ENCODE measurements at regions of chr19 and their contacts with region 1.

Region 1: DNA sequence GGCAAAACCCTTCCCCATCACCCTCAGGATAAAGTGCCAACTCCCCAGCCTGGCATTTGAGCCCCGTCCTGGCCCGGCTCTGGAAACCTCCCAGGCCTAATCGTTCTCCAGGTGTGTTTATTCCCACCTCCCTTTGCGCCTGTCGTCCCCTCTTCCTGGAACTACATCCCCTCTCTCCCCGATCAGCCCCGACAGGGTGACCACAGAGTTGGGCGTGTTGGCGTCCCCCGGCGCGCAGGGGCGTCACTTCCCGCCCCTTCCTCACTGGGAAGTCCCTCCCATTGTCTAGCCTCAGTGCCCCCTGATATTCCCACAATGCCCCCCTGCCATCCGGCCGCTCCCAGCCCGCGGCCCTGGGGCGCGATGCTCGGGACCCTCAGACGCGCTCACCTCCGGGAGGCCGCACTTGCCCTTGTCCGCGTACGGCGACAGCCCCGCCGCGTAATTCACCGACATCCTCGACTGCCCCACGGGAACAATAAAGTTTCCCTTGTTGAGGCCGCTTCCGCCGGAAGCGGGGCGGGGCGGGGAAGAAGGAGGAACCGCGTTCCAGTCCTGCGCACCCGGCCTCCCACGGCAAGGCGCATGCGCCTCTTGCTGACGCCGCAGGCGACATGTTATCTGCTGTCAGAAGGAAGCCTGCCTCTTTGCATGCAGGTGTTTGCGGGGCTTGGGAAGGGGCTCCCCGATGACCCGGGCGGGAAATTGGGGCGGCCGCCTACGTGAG is at the starts of genes ANKRD24 and SIRT6:
- DNase-seq: peak; percentile 96
- H3K4me3 Mint-ChIP-seq: peak within 1 kb of the TSS; percentile 98
- H3K27ac Mint-ChIP-seq: peak within 1 kb of the TSS; percentile 94
- H3K4me1 Mint-ChIP-seq: peaks cover 45% of the 10 kb centered on the region
- H3K27me3 Mint-ChIP-seq: peaks cover 8% of the 10 kb centered on the region
- total RNA-seq, gene ANKRD24: 0.49 and 0.54 TPM in 2 replicates
- total RNA-seq, gene SIRT6: 42.6 and 46.4 TPM in 2 replicates

Region 2: DNA sequence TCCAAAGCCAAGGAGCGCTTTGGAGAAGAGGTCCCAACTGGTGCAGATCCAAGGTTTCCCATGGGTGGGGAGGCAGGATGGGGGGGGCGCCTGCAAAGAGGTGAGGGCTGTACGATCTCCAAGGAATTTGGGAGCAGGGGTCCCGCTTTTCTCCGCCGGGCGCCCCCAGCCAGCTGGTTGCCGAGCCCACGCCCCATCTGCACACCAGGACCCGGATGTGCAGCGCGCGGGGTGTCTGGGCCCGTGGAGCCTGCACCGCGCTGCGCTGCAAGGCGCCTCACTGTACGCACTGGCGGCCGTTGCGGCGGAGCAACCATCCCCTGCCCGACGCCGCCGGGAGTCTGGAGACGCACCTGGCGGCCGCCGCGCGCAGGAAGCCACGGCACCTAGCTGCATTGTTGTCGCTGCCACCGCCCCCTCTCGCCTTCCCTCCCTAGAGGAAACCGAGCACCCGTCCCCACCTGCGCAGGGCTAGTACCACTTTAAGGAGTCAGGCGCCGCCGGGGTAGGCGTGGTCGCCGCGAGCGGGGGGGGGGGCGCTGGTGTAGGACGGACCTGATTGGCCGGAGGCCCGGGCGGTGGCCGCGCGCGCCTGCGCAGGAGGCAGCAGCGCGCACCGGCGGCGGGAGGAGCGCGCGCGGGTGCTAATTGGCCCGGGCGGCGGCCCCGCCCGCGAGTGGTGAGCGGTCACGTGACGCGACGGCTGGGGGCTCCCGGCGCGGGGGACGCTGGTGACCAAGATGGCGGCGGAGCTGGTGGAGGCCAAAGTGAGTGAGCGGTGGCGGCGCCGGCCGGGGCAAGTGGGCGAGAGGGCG is 175.0 kb before region 1 on chr19 and contains the start of gene PIAS4:
- intact Hi-C with region 1: loop called (anchors 2 kb)
- DNase-seq: peak; percentile 94
- H3K4me3 Mint-ChIP-seq: peak within 1 kb of the TSS; percentile 90
- H3K27ac Mint-ChIP-seq: peak within 1 kb of the TSS; percentile 84
- H3K4me1 Mint-ChIP-seq: peaks cover 18% of the 10 kb centered on the region
- H3K27me3 Mint-ChIP-seq: no peaks in the 10 kb centered on the region
- total RNA-seq, gene PIAS4: 37.6 and 41.0 TPM in 2 replicates

Region 3: DNA sequence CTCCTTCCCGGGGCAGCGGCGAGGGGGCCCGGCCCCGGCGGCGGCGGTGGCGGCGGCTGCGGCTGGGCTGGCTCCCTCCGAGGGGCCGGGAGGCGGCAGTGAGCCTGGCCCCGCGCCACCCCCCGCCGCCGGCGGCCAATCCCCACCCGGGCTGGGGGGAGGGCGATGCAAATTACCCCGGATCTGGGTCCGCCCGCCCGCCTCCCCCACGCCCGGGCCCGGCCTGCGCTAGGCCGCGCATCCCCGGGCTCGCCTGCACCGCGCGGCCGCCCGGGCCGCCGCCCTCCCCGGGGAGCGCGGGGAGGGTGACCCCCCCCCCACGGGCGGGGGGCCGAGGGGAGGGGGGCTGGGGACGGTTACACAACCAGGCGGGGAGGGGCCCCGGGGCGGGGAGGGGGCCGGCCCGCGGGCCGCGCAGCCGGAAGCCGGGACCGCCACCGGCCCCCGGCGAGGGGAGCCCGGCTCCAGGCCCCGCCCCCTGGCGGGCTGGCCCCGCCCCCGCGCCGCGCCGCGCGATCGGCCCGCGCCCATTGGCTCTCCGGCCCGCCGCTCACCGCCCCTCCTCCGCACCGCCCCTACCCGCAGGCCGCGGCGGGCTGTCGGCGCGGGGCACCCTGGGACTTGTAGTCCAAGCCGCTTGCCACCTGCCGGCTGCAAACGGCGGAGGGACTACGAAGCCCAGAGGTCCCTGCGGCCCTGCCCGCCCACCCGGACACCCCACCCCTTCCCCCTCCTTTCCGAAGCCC is 116.6 kb before region 1 on chr19:
- intact Hi-C with region 1: loop called (anchors 1 kb)
- DNase-seq: peak; percentile 97
- H3K4me3 Mint-ChIP-seq: peak overlapping the region; percentile 64
- H3K27ac Mint-ChIP-seq: no peak overlapping the region
- H3K4me1 Mint-ChIP-seq: peaks cover 16% of the 10 kb centered on the region
- H3K27me3 Mint-ChIP-seq: no peaks in the 10 kb centered on the region

Region 4: GRCh38 chr19:4123615-4124568 is 58.4 kb before region 1 on chr19 and contains the start of gene MAP2K2:
- intact Hi-C with region 1: loop called (anchors 1 kb)
- DNase-seq: peak; percentile 94
- H3K4me3 Mint-ChIP-seq: peak within 1 kb of the TSS; percentile 100
- H3K27ac Mint-ChIP-seq: peak within 1 kb of the TSS; percentile 98
- H3K4me1 Mint-ChIP-seq: peaks cover 17% of the 10 kb centered on the region
- H3K27me3 Mint-ChIP-seq: no peaks in the 10 kb centered on the region
- total RNA-seq, gene MAP2K2: 131 and 135 TPM in 2 replicates

Region 5: DNA sequence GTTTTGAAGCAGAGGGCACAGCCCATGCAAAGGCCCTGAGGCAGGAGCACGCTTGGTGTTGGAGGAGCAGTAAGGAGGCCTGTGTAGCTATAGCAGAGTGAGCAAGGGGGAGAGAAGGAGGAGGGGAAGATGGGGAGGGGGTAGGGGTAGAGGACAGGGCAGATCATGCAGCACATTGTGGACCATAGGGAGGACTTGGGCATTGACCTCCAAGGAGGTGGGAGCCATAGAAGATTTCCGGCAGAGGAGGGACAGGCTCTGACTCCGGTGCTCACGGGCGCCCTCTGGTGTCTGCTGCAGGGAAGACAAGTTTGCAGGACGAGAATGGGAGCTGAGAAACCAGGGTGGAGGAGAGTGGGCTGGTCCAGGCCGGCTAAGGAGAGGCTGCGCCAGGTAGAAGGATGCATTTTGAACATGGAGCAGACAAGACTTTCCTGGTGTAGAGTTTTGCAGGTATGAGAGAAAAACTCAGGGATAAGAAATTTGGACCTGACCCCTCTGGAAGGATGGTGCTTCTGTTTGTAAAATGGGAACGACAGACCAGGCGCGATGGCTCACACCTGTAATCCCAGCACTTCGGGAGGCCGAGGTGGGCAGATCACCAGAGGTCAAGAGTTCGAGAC is 42.5 kb before region 1 on chr19:
- intact Hi-C with region 1: loop called (anchors 5 kb)
- DNase-seq: peak; percentile 78
- H3K4me3 Mint-ChIP-seq: no peak overlapping the region
- H3K27ac Mint-ChIP-seq: no peak overlapping the region
- H3K4me1 Mint-ChIP-seq: peaks cover 11% of the 10 kb centered on the region
- H3K27me3 Mint-ChIP-seq: peaks cover 7% of the 10 kb centered on the region

Region 6: GRCh38 chr19:4208385-4209094 is 26.3 kb after region 1 on chr19:
- intact Hi-C with region 1: loop called (anchors 2 kb)
- DNase-seq: no peak
- H3K4me3 Mint-ChIP-seq: no peak overlapping the region
- H3K27ac Mint-ChIP-seq: no peak overlapping the region
- H3K4me1 Mint-ChIP-seq: no peaks in the 10 kb centered on the region
- H3K27me3 Mint-ChIP-seq: peaks cover 6% of the 10 kb centered on the region

Region 7: DNA sequence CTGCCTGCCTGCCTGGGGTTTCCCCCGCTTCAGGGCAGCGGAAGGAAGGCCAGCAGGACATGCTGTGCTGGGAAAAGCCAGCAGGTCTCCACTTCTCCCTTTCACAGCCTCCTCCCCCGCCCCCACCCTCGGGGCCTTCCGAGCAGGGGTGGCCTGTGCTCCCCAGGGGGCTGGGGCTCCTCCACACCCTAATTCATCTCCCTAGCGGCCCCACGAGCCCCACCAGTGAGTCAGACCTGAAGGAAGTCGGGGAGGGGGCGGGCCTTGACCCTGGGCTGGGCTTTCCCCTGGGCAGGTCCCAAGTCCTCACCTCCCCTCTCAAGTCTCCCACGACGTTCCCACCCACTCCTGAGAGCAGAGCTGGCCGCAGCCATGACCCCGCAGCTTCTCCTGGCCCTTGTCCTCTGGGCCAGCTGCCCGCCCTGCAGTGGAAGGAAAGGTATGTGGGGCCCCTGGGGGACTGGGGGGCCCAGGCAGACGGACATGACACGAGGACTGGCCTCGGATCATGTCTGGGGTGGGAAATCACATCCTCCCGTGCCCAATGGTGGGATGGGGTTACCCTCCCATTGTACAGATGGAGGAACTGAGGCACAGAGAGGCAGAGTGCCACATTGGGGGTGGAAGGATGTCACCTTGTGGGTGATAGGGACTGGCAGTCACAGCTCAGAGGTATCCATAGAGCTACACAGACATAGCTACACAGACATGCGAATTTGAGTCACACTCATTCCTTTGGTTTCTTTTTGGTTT is 47.1 kb after region 1 on chr19 and contains the start of gene EBI3:
- intact Hi-C with region 1: loop called (anchors 1 kb)
- DNase-seq: peak; percentile 60
- H3K4me3 Mint-ChIP-seq: no peak within 1 kb of the TSS
- H3K27ac Mint-ChIP-seq: no peak within 1 kb of the TSS
- H3K4me1 Mint-ChIP-seq: peaks cover 11% of the 10 kb centered on the region
- H3K27me3 Mint-ChIP-seq: no peaks in the 10 kb centered on the region
- total RNA-seq, gene EBI3: 43.3 and 49.7 TPM in 2 replicates

Measured in activated T-helper 1 cell treated with anti-CD3 and anti-CD28 coated beads, Interleukin-12 subunit alpha, Interleukin-12 subunit beta, Interleukin-2, Interleukin-4 antibody, amounts not matched to agents 30 ng/mL and 10 ng/mL and 1 ng/mL, durations not matched to agents 14 hours and 24 hours and 36 hours (primary cell).